Mucosa of descending colon (tissue), 3 donors: ENCODE measurements at regions of chr1 and their contacts with region 1.

Region 1: DNA sequence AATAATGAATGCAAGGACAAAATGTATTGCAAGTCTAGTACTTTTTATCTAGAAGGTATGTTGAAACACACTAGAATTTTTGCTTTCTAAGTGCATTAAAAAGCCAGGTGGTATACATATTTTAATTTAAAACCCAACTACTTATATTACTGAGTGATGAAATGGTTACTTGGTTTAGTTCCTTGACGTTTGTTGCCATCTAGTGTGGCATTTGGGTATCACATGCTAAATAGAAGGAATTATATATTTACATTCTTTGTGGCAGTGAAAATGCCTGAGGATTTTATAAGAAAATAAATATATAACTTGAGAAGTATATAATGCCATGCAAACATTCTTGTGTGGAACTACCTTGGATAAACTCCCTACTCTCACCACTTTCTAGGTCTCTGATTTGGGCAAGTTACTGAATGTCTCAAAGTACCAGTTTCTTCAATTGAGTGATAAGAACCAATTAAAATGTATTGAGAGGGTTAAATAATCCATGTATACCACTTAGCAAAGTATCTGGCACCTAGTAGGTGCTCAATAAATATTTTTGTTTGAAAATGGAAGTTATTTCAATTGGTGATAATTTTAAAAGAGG is 69.6 kb downstream of the SDCCAG8 start:
- DNase-seq: peak in 1 of 3 donors; percentile 68
- ATAC-seq: peak; percentile 53
- H3K4me3 ChIP-seq: no peak overlapping the region
- H3K4me1 ChIP-seq: no peaks in the 10 kb centered on the region
- CTCF ChIP-seq: peak; percentile 41

Region 2: DNA sequence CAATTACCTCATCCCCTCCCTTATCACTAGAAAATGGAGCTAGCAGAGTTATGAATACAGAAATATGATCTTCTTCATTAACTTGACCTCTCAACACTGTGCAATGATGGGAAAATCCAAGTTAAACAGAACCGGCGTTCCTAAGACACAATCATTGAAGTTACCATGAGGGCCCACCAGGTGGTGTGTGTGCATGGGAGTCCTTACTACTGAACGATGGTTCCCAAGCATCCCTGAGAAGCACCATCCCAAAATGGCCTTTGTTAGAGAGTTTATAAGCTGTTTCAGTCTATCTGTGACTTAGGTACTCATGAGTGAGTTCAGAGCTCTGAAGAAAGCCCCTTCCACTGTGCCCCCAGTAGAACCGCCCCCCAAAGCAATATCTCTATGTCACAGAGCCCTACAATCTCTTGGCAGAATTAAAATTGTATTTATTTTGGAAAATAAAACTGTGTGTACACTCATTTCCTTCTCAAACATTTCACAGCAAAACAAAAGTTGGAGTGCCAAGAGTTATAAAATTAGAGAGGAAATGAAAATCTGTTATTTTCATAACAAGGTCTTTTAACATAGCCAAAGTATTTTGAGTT is 857.7 kb before region 1 on chr1:
- intact Hi-C with region 1: loop called in 1 of 2 experiments (anchors 10 kb)
- DNase-seq: peak in 1 of 3 donors; percentile 63
- ATAC-seq: peak; percentile 66
- H3K4me3 ChIP-seq: no peak overlapping the region
- H3K4me1 ChIP-seq: no peaks in the 10 kb centered on the region
- CTCF ChIP-seq: peak; percentile 12

Region 3: GRCh38 chr1:243421784-243422183 is 96.4 kb after region 1 on chr1:
- intact Hi-C with region 1: no loop called
- DNase-seq: peak in 2 of 3 donors; percentile 35 to 41
- ATAC-seq: peak; percentile 99
- H3K4me3 ChIP-seq: no peak overlapping the region
- H3K4me1 ChIP-seq: peaks cover 2% of the 10 kb centered on the region
- CTCF ChIP-seq: no peak